ENCODE measurements at regions of chr2 and their contacts with region 1.

Region 1: GRCh38 chr2:43611987-43612894 is 16.4 kb upstream of the THADA start:
- DNase-seq: peak; percentile 27 to 76 (median 69)
- ATAC-seq: peak; percentile 99
- H3K4me3 ChIP-seq: no peak overlapping the region
- H3K4me3 Mint-ChIP-seq: no peak overlapping the region
- H3K27ac ChIP-seq: no peak overlapping the region
- H3K27ac Mint-ChIP-seq: no peak overlapping the region
- H3K4me1 ChIP-seq: no peaks in the 10 kb centered on the region
- H3K4me1 Mint-ChIP-seq: peaks cover 0 to 11% (median 0%) of the 10 kb centered on the region in 7 donors
- H3K27me3 ChIP-seq: peaks cover 0 to 1% of the 10 kb centered on the region in 2 donors
- H3K27me3 Mint-ChIP-seq: peaks cover 0 to 10% (median 7%) of the 10 kb centered on the region in 5 donors

Region 2: GRCh38 chr2:42828487-42829425 is 783.5 kb before region 1 on chr2:
- CTCF ChIA-PET with region 1: no interaction called
- POLR2A ChIA-PET with region 1: no interaction called
- intact Hi-C with region 1: loop called in 1 of 2 experiments (anchors 1 kb)
- DNase-seq: peak; percentile 44 to 69 (median 63)
- ATAC-seq: peak; percentile 93
- H3K4me3 ChIP-seq: no peak overlapping the region
- H3K4me3 Mint-ChIP-seq: peak overlapping the region in 6 of 10 donors; percentile 18 to 47 (median 21)
- H3K27ac ChIP-seq: no peak overlapping the region
- H3K27ac Mint-ChIP-seq: peak overlapping the region in 2 of 9 donors; percentile 21 to 25
- H3K4me1 ChIP-seq: peaks cover 3 to 6% of the 10 kb centered on the region in 2 donors
- H3K4me1 Mint-ChIP-seq: peaks cover 7 to 19% (median 14%) of the 10 kb centered on the region in 7 donors
- H3K27me3 ChIP-seq: no peaks in the 10 kb centered on the region
- H3K27me3 Mint-ChIP-seq: peaks cover 0 to 8% (median 5%) of the 10 kb centered on the region in 5 donors

Region 3: DNA sequence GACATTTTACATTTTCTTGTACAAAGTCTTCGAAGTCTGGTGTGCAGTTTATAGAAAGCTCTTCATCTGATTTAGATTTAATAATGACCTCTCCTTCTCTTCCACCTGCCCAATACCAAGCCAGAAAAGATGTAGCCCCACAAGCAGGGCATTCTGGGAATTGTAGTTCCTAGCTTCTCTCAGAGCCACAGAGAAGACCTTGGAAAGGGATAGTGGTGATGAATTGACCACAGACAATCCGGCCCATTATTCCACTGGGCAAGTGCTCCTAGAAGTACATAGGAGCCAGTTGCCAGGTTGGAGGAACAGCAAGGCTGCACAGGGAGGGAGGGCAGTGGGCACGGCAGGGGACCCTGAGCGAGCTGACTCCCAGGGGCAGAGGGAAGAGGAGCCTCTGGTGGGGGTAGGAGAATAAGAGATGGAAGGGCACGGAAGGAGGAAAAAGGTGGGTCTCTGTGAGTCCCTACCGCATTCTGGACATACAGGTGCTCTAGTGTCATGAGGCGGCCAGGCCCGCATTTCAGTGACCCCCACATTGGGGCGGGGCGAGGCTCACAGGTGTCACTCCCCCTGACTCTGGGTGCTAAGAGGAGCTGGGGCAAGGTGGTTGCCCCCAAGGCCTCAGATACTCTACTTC is 667.3 kb before region 1 on chr2:
- CTCF ChIA-PET with region 1: interaction called, 5 read pairs
- POLR2A ChIA-PET with region 1: no interaction called
- intact Hi-C with region 1: loop called (anchors 1 kb)
- DNase-seq: no peak
- ATAC-seq: no peak
- H3K4me3 ChIP-seq: no peak overlapping the region
- H3K4me3 Mint-ChIP-seq: no peak overlapping the region
- H3K27ac ChIP-seq: no peak overlapping the region
- H3K27ac Mint-ChIP-seq: no peak overlapping the region
- H3K4me1 ChIP-seq: no peaks in the 10 kb centered on the region
- H3K4me1 Mint-ChIP-seq: peaks cover 0 to 7% (median 5%) of the 10 kb centered on the region in 7 donors
- H3K27me3 ChIP-seq: no peaks in the 10 kb centered on the region
- H3K27me3 Mint-ChIP-seq: peaks cover 0 to 8% (median 0%) of the 10 kb centered on the region in 5 donors

Region 4: GRCh38 chr2:43507137-43507536 is 105.1 kb before region 1 on chr2:
- CTCF ChIA-PET with region 1: no interaction called
- POLR2A ChIA-PET with region 1: no interaction called
- intact Hi-C with region 1: no loop called
- DNase-seq: no peak
- ATAC-seq: no peak
- H3K4me3 ChIP-seq: no peak overlapping the region
- H3K4me3 Mint-ChIP-seq: no peak overlapping the region
- H3K27ac ChIP-seq: no peak overlapping the region
- H3K27ac Mint-ChIP-seq: peak overlapping the region in 1 of 9 donors; percentile 3
- H3K4me1 ChIP-seq: no peaks in the 10 kb centered on the region
- H3K4me1 Mint-ChIP-seq: peaks cover 4 to 32% (median 26%) of the 10 kb centered on the region in 7 donors
- H3K27me3 ChIP-seq: no peaks in the 10 kb centered on the region
- H3K27me3 Mint-ChIP-seq: no peaks in the 10 kb centered on the region

Region 5: GRCh38 chr2:43576981-43577892 is 35.0 kb before region 1 on chr2:
- CTCF ChIA-PET with region 1: no interaction called
- POLR2A ChIA-PET with region 1: no interaction called
- intact Hi-C with region 1: loop called in 1 of 2 experiments (anchors 2 kb)
- DNase-seq: peak in 7 of 9 donors; percentile 15 to 54 (median 44)
- ATAC-seq: peak; percentile 70
- H3K4me3 ChIP-seq: no peak overlapping the region
- H3K4me3 Mint-ChIP-seq: no peak overlapping the region
- H3K27ac ChIP-seq: no peak overlapping the region
- H3K27ac Mint-ChIP-seq: no peak overlapping the region
- H3K4me1 ChIP-seq: no peaks in the 10 kb centered on the region
- H3K4me1 Mint-ChIP-seq: peaks cover 0 to 12% (median 6%) of the 10 kb centered on the region in 7 donors
- H3K27me3 ChIP-seq: no peaks in the 10 kb centered on the region
- H3K27me3 Mint-ChIP-seq: no peaks in the 10 kb centered on the region

Region 6: GRCh38 chr2:43637030-43637803 is 25.0 kb after region 1 on chr2 and contains the start of gene PLEKHH2:
- CTCF ChIA-PET with region 1: no interaction called
- POLR2A ChIA-PET with region 1: interaction called, 5 read pairs
- intact Hi-C with region 1: loop called in 1 of 2 experiments (anchors 2 kb)
- DNase-seq: peak; percentile 69 to 89 (median 84)
- ATAC-seq: peak; percentile 100
- H3K4me3 ChIP-seq: peak within 1 kb of the TSS; percentile 93
- H3K4me3 Mint-ChIP-seq: peak within 1 kb of the TSS; percentile 87 to 100 (median 95)
- H3K27ac ChIP-seq: peak within 1 kb of the TSS; percentile 56
- H3K27ac Mint-ChIP-seq: peak within 1 kb of the TSS; percentile 10 to 90 (median 80)
- H3K4me1 ChIP-seq: peaks cover 0 to 10% of the 10 kb centered on the region in 2 donors
- H3K4me1 Mint-ChIP-seq: peaks cover 6 to 21% (median 19%) of the 10 kb centered on the region in 7 donors
- H3K27me3 ChIP-seq: peaks cover 0 to 4% of the 10 kb centered on the region in 2 donors
- H3K27me3 Mint-ChIP-seq: peaks cover 16 to 55% (median 28%) of the 10 kb centered on the region in 5 donors
- total RNA-seq, gene PLEKHH2: 0.02 to 2.8 (median 2.0) TPM

Region 7: GRCh38 chr2:43898134-43898837 is 286.0 kb after region 1 on chr2:
- CTCF ChIA-PET with region 1: no interaction called
- POLR2A ChIA-PET with region 1: no interaction called
- intact Hi-C with region 1: loop called in 1 of 2 experiments (anchors 10 kb)
- DNase-seq: no peak
- ATAC-seq: no peak
- H3K4me3 ChIP-seq: no peak overlapping the region
- H3K4me3 Mint-ChIP-seq: no peak overlapping the region
- H3K27ac ChIP-seq: no peak overlapping the region
- H3K27ac Mint-ChIP-seq: no peak overlapping the region
- H3K4me1 ChIP-seq: no peaks in the 10 kb centered on the region
- H3K4me1 Mint-ChIP-seq: no peaks in the 10 kb centered on the region
- H3K27me3 ChIP-seq: no peaks in the 10 kb centered on the region
- H3K27me3 Mint-ChIP-seq: no peaks in the 10 kb centered on the region

Measured in naive thymus-derived CD4-positive, alpha-beta T cell (primary cell).